Esophagus squamous epithelium (tissue), 5 donors: ENCODE measurements at regions of chr5 and their contacts with region 1.

Region 1: GRCh38 chr5:76771705-76772405 is 47.0 kb upstream of the F2RL1 start:
- DNase-seq: no peak
- H3K4me3 ChIP-seq: no peak overlapping the region
- H3K27ac ChIP-seq: no peak overlapping the region
- H3K4me1 ChIP-seq: peaks cover 0 to 6% (median 0%) of the 10 kb centered on the region in 3 donors
- H3K27me3 ChIP-seq: no peaks in the 10 kb centered on the region
- CTCF ChIP-seq: no peak
- POLR2A ChIP-seq: no peak

Region 2: GRCh38 chr5:76451031-76451701 is 320.7 kb before region 1 on chr5:
- intact Hi-C with region 1: no loop called
- DNase-seq: no peak
- H3K4me3 ChIP-seq: no peak overlapping the region
- H3K27ac ChIP-seq: no peak overlapping the region
- H3K4me1 ChIP-seq: peaks cover 0 to 10% (median 3%) of the 10 kb centered on the region in 3 donors
- H3K27me3 ChIP-seq: peaks cover 0 to 7% (median 0%) of the 10 kb centered on the region in 4 donors
- CTCF ChIP-seq: no peak
- POLR2A ChIP-seq: no peak

Region 3: DNA sequence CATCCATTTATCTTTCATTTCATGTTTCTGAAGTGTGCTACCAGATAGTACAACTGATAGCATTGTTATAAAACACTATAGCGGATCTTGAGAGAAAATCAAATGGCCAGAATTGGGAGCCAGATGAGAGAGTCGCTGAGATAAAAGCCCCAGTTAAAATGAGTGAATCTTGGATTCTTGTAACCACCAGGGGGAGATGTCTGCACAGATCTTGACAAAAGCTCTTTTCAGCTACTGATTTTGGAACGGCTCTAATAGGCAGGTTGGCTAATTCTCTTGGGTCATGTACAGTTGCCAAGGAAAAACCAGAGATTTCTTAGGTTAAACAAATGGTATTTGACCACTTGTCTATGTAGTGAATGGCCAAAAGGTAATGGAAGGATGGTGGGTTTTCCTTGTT is 170.4 kb before region 1 on chr5:
- intact Hi-C with region 1: loop called (anchors 5 kb)
- DNase-seq: no peak
- H3K4me3 ChIP-seq: no peak overlapping the region
- H3K27ac ChIP-seq: no peak overlapping the region
- H3K4me1 ChIP-seq: peaks cover 0 to 29% (median 0%) of the 10 kb centered on the region in 3 donors
- H3K27me3 ChIP-seq: no peaks in the 10 kb centered on the region
- CTCF ChIP-seq: peak; percentile 58 to 79 (median 72)
- POLR2A ChIP-seq: no peak

Region 4: DNA sequence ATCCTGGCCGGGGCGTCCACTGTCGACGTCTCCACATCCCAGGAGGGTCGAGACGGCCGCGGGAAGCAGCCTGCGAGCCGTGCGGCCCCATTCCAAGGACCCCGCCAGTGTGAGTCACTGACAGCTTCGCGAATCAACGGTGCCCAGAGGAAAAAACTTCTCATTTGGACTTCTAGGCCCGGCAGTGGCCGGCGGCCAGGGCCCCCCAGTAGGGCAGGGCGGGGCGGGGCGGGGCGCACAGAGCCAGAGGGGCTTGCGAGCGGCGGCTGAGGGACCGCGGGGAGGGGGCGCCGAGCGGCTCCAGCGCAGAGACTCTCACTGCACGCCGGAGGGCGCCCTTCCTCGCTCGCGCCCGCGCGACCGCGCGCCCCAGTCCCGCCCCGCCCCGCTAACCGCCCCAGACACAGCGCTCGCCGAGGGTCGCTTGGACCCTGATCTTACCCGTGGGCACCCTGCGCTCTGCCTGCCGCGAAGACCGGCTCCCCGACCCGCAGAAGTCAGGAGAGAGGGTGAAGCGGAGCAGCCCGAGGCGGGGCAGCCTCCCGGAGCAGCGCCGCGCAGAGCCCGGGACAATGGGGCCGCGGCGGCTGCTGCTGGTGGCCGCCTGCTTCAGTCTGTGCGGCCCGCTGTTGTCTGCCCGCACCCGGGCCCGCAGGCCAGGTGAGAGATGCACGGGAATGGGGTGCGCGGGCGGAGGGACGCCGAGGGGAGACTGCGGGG is 56.0 kb before region 1 on chr5 and contains the start of gene F2R:
- intact Hi-C with region 1: loop called (anchors 10 kb)
- DNase-seq: no peak
- H3K4me3 ChIP-seq: peak within 1 kb of the TSS; percentile 47 to 93 (median 57)
- H3K27ac ChIP-seq: peak within 1 kb of the TSS; percentile 53 to 82 (median 66)
- H3K4me1 ChIP-seq: peaks cover 7 to 45% (median 10%) of the 10 kb centered on the region in 3 donors
- H3K27me3 ChIP-seq: peaks cover 0 to 43% (median 7%) of the 10 kb centered on the region in 4 donors
- CTCF ChIP-seq: peak in 4 of 6 experiments; percentile 10 to 46 (median 34)
- POLR2A ChIP-seq: peak in 2 of 4 donors; percentile 13 to 17
- total RNA-seq, gene F2R: 0.38 to 13.0 (median 4.9) TPM

Region 5: DNA sequence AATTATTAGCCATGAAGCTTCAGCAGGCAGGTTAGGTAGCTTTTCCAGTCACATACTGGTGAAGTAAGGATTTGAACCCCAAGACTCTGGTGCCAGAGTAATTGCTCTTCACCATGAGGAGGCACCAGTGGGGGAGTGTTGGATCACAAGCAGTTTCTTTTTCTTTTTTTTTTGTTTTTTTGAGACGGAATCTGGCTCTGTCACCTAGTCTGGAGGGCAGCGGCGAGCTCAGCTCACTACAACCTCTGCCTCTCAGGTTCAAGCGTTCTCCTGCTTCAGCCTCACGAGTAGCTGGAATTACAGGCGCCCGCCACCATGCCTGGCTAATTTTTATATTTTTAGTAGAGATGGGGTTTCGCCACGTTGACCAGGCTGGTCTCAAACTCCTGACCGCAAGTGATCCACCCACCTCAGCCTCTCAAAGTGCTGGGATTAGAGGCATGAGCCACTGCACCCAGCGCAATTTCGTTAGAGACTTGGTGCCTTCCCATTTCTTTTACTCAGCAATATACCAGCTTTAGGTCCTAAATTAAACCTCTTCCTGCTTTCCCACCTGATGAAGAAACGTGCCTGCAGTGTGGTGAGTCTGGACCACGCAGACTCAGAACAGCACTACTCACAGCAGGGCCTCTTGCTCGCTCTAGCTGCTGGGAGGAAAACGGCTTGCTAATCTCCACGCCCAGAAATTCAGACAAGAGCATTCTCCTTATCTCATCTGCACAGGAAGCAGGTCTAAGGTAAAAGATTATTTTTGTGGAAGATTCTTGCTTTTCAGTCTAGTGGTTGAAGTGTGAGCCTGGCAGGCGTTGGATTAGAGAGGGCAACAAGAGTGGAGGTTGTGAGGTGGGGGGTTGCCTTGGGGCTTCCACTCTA is 77.8 kb after region 1 on chr5 and contains the start of gene S100Z:
- intact Hi-C with region 1: no loop called
- DNase-seq: no peak
- H3K4me3 ChIP-seq: no peak within 1 kb of the TSS
- H3K27ac ChIP-seq: peak within 1 kb of the TSS in 2 of 4 donors; percentile 25 to 34
- H3K4me1 ChIP-seq: peaks cover 0 to 12% (median 0%) of the 10 kb centered on the region in 3 donors
- H3K27me3 ChIP-seq: peaks cover 0 to 48% (median 0%) of the 10 kb centered on the region in 4 donors
- CTCF ChIP-seq: no peak
- POLR2A ChIP-seq: no peak
- total RNA-seq, gene S100Z: 0.53 TPM in 1 of 4 donors, not detected in the others